ENCODE measurements at regions of chr10 and their contacts with region 1.

Region 1: DNA sequence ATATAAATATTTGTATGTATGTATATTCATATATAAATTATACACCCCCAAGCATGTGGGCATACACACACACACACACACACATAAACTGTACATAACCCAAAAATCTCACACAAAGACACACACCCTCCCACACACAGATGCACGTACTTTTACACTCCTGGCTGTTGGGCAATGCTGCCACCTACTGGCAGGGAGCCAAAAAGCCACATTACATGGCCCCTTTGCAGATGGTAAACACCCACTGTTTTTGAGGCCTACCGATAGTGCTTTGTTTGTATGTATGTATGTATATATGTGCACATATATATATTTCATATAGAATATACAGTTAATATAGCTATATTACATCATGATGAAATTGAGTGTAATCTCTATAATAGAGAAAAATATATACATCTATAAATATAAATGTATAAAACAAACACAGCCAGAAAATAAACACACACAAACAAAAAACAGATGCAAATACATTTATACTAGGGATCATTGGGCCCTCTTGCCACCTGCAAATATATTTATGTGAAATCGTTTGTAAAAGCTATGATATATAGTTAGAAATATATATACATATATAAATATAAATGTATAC is 120.1 kb upstream of the ACBD5 start:
- DNase-seq: peak; percentile 54
- H3K4me3 ChIP-seq: no peak overlapping the region
- H3K27ac ChIP-seq: no peak overlapping the region
- H3K4me1 ChIP-seq: no peaks in the 10 kb centered on the region
- H3K27me3 ChIP-seq: no peaks in the 10 kb centered on the region
- CTCF ChIP-seq: peak; percentile 95 to 96

Region 2: DNA sequence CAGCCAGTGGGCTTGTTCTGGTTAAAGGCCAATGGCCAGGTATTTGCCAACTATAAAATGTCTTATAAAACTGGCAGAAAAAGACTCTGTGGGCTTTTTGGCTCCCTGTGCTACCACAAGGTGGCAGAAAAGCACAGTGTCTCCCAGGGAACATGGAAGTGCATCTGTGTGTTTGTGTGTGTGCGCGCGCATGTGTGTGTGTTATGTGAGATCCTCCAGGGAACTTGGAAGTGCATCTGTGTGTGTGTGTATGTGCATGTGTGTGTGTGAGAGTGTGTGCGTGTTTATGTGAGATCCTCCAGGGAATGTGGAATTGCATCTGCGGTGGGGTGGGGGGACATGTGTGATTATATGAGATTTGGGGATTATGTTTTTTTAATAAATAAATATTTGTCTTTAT is 469.7 kb before region 1 on chr10:
- CTCF ChIA-PET with region 1: no interaction called
- dilution Hi-C with region 1: no loop called
- in situ Hi-C with region 1: loop called in 1 of 2 experiments (anchors 5 kb)
- intact Hi-C with region 1: loop called (anchors 1 kb)
- DNase-seq: peak; percentile 57
- H3K4me3 ChIP-seq: no peak overlapping the region
- H3K27ac ChIP-seq: no peak overlapping the region
- H3K4me1 ChIP-seq: no peaks in the 10 kb centered on the region
- H3K27me3 ChIP-seq: no peaks in the 10 kb centered on the region
- CTCF ChIP-seq: peak; percentile 80 to 81

Region 3: GRCh38 chr10:27155066-27155754 is 205.5 kb before region 1 on chr10 and contains the start of gene MASTL:
- CTCF ChIA-PET with region 1: no interaction called
- dilution Hi-C with region 1: no loop called
- in situ Hi-C with region 1: no loop called
- intact Hi-C with region 1: loop called (anchors 10 kb)
- DNase-seq: peak; percentile 95
- H3K4me3 ChIP-seq: peak within 1 kb of the TSS; percentile 55 to 98 (median 96)
- H3K27ac ChIP-seq: peak within 1 kb of the TSS; percentile 99
- H3K4me1 ChIP-seq: peaks cover 15% of the 10 kb centered on the region
- H3K27me3 ChIP-seq: no peaks in the 10 kb centered on the region
- CTCF ChIP-seq: no peak
- total RNA-seq, gene MASTL: 6.5 to 15.8 TPM

Region 4: DNA sequence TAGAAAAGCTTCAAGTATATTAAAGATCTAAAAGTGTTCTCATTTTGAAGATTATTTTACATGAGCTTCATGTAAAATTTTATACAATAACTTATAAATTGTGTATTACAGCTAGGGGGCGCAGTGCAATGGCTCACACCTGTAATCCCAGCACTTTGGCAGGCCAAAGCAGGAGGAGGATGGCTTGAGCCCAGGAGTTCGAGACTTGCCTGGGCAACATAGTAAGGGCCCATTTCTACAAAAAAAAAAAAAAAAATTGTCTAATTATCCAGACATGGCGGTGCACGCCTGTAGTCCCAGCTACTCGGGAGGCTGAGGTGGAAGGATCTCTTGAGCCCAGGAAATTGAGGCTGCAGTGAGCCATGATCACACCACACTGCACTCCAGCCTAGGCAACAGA is 136.7 kb before region 1 on chr10:
- CTCF ChIA-PET with region 1: no interaction called
- dilution Hi-C with region 1: no loop called
- in situ Hi-C with region 1: no loop called
- intact Hi-C with region 1: loop called (anchors 1 kb)
- DNase-seq: peak; percentile 5
- H3K4me3 ChIP-seq: no peak overlapping the region
- H3K27ac ChIP-seq: no peak overlapping the region
- H3K4me1 ChIP-seq: no peaks in the 10 kb centered on the region
- H3K27me3 ChIP-seq: no peaks in the 10 kb centered on the region
- CTCF ChIP-seq: peak; percentile 24 to 53

Measured in mammary epithelial cell (primary cell).